Caco-2 (cell line): ENCODE measurements at regions of chr2 and their contacts with region 1.

Region 1: DNA sequence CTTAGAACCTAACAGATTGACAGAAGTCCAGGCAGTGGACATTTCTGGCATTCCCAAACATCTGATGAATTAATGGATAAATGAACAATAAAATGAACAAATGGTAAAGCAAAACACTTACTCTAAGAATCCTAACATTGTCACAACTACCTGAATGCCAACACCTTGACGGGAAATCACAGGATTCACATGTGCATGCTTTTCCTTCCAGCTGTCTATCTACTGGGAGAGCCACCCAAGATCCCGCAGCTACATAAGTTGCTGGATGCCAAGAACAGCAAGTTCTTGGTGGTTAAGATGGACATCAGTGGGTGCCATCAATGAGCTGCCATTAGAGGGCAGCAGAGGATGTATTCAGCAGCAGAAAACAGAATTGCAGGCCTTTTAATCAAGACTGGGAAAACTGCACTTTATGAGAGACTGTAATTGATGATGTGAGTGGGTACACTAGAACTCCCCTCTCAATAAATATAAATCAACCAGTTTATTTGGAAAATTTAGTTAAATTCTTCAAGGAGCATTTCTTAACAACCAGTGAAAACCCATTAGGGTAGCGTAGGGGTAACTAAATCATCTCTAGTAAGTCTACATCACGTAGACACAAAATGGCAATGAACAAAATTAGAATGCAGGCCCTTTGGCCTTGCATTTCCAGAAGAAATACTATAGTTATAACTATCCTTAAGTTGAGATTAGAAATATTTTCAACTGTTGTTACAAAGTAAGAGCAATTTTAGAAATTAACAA is 45.6 kb downstream of the SESTD1 start:
- DNase-seq: peak; percentile 70 to 71
- H3K4me3 ChIP-seq: no peak overlapping the region
- H3K4me3 Mint-ChIP-seq: no peak overlapping the region
- H3K27ac Mint-ChIP-seq: no peak overlapping the region
- H3K4me1 ChIP-seq: no peaks in the 10 kb centered on the region
- H3K4me1 Mint-ChIP-seq: no peaks in the 10 kb centered on the region
- H3K27me3 ChIP-seq: no peaks in the 10 kb centered on the region
- H3K27me3 Mint-ChIP-seq: no peaks in the 10 kb centered on the region
- CTCF ChIP-seq: peak; percentile 82 to 90

Region 2: GRCh38 chr2:179180242-179180641 is 38.8 kb before region 1 on chr2:
- CTCF ChIA-PET with region 1: interaction called, 3 read pairs
- POLR2A ChIA-PET with region 1: no interaction called
- intact Hi-C with region 1: loop called (anchors 1 kb)
- DNase-seq: peak; percentile 68 to 82
- H3K4me3 ChIP-seq: no peak overlapping the region
- H3K4me3 Mint-ChIP-seq: peak overlapping the region; percentile 57
- H3K27ac Mint-ChIP-seq: peak overlapping the region; percentile 75
- H3K4me1 ChIP-seq: peaks cover 37% of the 10 kb centered on the region
- H3K4me1 Mint-ChIP-seq: peaks cover 39% of the 10 kb centered on the region
- H3K27me3 ChIP-seq: no peaks in the 10 kb centered on the region
- H3K27me3 Mint-ChIP-seq: no peaks in the 10 kb centered on the region
- CTCF ChIP-seq: no peak

Region 3: DNA sequence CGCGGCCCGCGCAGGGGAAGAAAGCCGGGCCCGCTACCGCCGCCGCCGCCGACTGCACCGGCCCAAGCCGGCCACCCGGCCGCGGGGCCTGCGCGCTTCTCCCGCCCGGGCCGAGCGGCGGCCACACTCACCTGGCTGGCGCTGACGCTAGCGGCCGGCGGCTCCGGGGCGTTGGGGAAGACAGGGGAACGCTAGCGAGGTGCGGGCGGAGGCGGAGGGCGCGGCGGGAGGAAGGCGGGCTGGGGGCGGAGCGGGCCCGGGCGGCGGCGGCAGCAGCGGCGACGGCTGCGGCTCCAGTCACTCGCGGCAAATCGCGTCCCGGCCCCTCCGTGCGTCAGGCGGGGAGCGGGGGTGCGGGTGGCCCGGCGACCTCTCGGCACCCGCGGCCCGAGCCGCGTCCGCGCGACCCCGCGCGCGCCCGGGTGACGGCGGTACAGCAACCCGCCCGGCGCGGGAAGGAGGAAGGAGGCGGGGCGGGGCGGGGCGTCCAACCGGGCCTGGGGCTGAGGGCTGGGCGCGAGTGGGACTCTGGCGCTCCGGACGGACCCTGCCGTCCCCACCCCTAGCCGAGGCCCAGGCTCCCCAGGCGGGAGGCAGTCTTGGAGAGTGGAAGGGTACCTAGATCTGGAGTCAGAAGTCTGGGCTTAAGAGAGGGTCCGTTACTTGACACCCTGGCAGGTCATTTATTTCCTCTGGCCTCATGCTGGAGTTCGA is 45.5 kb after region 1 on chr2 and contains the start of gene SESTD1:
- CTCF ChIA-PET with region 1: no interaction called
- POLR2A ChIA-PET with region 1: no interaction called
- intact Hi-C with region 1: loop called (anchors 5 kb)
- DNase-seq: peak; percentile 76 to 85
- H3K4me3 ChIP-seq: peak within 1 kb of the TSS; percentile 85
- H3K4me3 Mint-ChIP-seq: peak within 1 kb of the TSS; percentile 95
- H3K27ac Mint-ChIP-seq: peak within 1 kb of the TSS; percentile 71
- H3K4me1 ChIP-seq: peaks cover 23% of the 10 kb centered on the region
- H3K4me1 Mint-ChIP-seq: peaks cover 31% of the 10 kb centered on the region
- H3K27me3 ChIP-seq: no peaks in the 10 kb centered on the region
- H3K27me3 Mint-ChIP-seq: no peaks in the 10 kb centered on the region
- CTCF ChIP-seq: no peak
- total RNA-seq, gene SESTD1: 44.7 and 50.2 TPM in 2 replicates

Region 4: GRCh38 chr2:179410552-179411356 is 191.7 kb after region 1 on chr2:
- CTCF ChIA-PET with region 1: interaction called, 6 read pairs
- POLR2A ChIA-PET with region 1: no interaction called
- intact Hi-C with region 1: loop called (anchors 1 kb)
- DNase-seq: peak; percentile 54 to 68
- H3K4me3 ChIP-seq: no peak overlapping the region
- H3K4me3 Mint-ChIP-seq: no peak overlapping the region
- H3K27ac Mint-ChIP-seq: no peak overlapping the region
- H3K4me1 ChIP-seq: no peaks in the 10 kb centered on the region
- H3K4me1 Mint-ChIP-seq: no peaks in the 10 kb centered on the region
- H3K27me3 ChIP-seq: no peaks in the 10 kb centered on the region
- H3K27me3 Mint-ChIP-seq: no peaks in the 10 kb centered on the region
- CTCF ChIP-seq: peak; percentile 78 to 84

Region 5: GRCh38 chr2:179440642-179441251 is 221.7 kb after region 1 on chr2:
- CTCF ChIA-PET with region 1: no interaction called
- POLR2A ChIA-PET with region 1: no interaction called
- intact Hi-C with region 1: loop called (anchors 1 kb)
- DNase-seq: peak in 1 of 2 experiments; percentile 42
- H3K4me3 ChIP-seq: no peak overlapping the region
- H3K4me3 Mint-ChIP-seq: no peak overlapping the region
- H3K27ac Mint-ChIP-seq: no peak overlapping the region
- H3K4me1 ChIP-seq: peaks cover 19% of the 10 kb centered on the region
- H3K4me1 Mint-ChIP-seq: peaks cover 16% of the 10 kb centered on the region
- H3K27me3 ChIP-seq: no peaks in the 10 kb centered on the region
- H3K27me3 Mint-ChIP-seq: no peaks in the 10 kb centered on the region
- CTCF ChIP-seq: peak; percentile 50 to 57